Activated CD4-positive, alpha-beta T cell treated with anti-CD3 and anti-CD28 coated beads for 36 hours (primary cell): ENCODE measurements at regions of chr16 and their contacts with region 1.

Region 1: DNA sequence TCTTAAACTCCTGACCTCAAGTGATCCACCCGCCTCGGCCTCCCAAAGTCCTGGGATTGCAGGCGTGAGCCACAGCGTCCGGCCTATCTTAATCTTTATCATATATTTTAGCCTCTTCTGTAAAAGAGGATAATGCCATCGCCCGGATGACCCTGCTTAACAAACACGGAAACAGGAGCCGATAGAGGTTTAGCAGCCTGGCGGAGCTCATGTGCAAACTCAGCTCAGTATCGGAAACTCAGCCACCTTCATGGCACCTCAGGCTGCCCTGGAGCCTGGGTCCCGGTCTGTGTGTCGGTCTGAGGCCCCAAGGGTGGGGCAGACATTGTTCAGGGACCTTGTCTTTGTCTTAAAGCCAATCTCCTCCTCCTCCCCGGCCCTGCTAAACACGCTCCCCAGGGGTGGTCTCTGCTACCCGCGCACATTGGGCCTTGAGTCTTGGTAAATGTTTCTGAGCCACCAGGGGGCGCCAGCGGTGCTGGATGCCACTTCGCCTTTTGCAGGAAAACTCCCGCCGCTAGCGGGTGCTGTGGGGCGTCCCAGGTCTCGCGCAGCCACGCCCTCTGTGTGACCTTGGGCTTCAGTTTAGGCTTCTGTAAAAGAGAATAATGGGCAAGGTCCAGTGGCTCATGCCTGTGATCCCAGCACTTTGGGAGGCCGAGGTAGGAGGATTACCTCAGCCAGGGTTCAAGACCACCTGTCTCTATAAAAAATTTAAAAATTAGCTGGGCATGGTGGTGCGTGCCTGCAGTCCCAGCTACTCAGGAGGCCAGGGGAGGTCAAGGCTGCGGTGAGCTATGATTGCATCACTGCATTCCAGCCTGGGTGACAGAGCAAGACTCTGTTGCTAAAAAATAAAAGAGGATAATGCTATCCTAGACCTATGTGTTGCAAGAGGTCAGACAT is 2.7 kb downstream of the CETP start:
- DNase-seq: peak; percentile 98
- ATAC-seq: peak; percentile 93
- H3K4me3 Mint-ChIP-seq: no peak overlapping the region
- H3K27ac Mint-ChIP-seq: peak overlapping the region; percentile 52
- H3K4me1 Mint-ChIP-seq: peaks cover 17% of the 10 kb centered on the region
- H3K27me3 Mint-ChIP-seq: no peaks in the 10 kb centered on the region

Region 2: DNA sequence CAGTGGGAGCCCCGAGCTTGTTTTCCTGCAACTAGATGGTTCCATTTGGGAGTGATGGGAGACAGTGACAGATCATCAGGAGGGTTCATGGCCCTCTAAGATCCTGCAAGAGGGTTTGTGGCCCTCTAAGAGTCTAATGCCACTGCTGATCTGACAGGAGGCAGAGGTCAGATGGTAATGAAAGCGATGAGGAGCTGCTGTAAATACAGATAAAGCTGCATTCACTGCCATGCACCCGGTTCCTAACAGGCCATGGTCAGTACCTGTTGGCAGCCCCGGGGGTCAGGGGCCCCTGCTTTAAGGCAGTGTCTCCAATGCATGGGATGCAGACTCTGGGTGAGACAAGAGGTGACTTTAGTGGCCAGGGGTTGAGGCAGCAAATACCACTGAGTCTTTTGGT is 68.7 kb before region 1 on chr16:
- CTCF ChIA-PET with region 1: no interaction called
- POLR2A ChIA-PET with region 1: no interaction called
- intact Hi-C with region 1: no loop called
- DNase-seq: no peak
- ATAC-seq: no peak
- H3K4me3 Mint-ChIP-seq: no peak overlapping the region
- H3K27ac Mint-ChIP-seq: no peak overlapping the region
- H3K4me1 Mint-ChIP-seq: peaks cover 16% of the 10 kb centered on the region
- H3K27me3 Mint-ChIP-seq: peaks cover 2% of the 10 kb centered on the region

Region 3: DNA sequence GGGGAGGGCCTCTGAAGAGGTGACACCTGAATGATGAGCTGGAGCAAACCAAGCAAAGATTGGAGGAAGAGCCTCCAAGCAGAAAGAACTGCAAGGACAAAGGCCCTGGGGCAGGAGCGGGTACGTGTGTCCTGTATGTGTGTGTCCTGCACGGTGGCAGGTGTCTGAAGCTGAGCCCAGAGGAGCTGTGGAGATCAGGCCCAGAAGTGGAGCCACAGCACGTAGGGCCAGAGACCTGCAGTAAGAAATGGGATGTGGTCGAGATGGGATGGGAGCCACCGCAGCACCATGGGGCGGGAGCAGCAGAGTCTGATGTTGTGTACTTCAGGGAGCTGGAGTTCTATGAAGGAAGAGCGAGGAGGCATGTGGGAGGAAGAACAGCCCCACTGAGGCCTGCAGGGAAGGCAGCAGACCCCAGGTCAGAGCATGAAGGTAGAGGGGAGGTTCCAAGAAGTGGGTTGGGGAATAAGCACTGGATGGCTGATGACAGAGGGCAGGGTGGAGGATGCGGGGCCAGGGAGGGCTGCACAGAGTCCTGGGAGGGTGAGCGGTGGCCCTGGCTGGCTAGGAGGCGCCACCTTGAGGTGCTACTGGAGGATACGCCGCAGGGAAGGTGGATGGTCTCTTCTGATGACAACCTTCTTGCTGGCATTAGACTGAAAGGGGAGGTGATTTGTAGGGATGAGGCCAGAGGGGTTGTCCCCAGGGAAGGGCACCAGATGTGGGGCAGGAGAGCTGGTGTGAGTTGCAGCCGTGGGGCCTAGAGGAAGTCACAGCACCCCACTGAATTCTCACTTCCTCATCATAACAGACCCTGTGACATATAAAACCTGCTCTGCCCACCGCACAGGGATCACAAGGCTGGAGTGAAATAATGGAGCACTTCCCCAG is 13.4 kb before region 1 on chr16:
- CTCF ChIA-PET with region 1: interaction called, 25 read pairs
- POLR2A ChIA-PET with region 1: no interaction called
- intact Hi-C with region 1: no loop called
- DNase-seq: peak; percentile 85
- ATAC-seq: peak; percentile 94
- H3K4me3 Mint-ChIP-seq: no peak overlapping the region
- H3K27ac Mint-ChIP-seq: no peak overlapping the region
- H3K4me1 Mint-ChIP-seq: peaks cover 18% of the 10 kb centered on the region
- H3K27me3 Mint-ChIP-seq: no peaks in the 10 kb centered on the region

Region 4: DNA sequence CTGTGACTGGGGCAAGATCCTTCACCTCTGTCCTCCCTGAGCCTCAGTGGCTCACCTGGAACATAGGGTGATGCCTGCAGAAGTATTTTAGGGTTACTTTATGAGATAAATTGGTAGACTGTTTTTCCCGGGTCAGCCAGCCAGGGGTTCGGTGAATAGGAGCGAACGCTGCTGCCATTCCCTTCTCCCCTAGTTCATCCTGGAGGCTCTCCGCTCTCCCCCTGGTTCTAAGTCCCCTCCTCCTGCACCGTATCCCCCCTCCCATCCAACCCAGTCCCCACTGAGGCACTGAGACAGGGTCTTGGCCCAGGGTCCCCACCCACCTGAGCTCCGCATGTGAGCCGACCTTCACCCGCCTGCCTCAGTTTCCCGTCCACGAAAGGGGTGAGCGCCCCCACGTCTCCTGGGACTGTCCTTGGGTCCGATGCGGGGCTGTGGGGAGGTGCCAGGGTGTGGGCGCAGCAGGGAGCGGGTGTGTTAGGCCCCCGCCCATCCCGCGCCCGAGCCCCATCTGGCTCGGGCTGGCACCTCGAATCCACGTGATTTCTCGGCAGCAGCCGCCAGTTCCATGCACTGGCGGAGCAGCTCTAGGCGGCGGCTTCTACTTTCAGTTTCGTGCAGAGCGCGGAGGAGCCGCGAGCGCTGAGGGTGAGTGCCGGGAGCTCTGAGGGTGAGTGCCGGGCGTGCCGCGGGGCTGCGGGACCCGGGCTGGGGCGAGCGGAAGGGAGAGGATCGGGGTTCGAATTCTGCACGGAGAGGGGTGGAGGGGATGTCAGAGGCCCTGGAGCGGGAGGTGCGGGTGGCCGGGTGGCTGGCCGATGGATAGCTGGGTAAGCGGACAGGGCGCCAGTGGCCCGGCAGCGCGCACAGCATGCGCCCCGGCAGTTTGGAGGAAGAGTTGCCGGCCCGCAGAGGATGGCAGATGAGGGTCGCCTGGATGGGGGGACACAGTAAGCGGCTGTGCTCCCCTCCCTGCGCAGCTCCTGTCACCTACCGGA is 24.8 kb after region 1 on chr16 and contains the start of gene NLRC5:
- CTCF ChIA-PET with region 1: interaction called, 38 read pairs
- POLR2A ChIA-PET with region 1: no interaction called
- intact Hi-C with region 1: loop called in 1 of 2 experiments (anchors 1 kb)
- DNase-seq: peak; percentile 97
- ATAC-seq: peak; percentile 78
- H3K4me3 Mint-ChIP-seq: peak within 1 kb of the TSS; percentile 98
- H3K27ac Mint-ChIP-seq: peak within 1 kb of the TSS; percentile 99
- H3K4me1 Mint-ChIP-seq: peaks cover 69% of the 10 kb centered on the region
- H3K27me3 Mint-ChIP-seq: no peaks in the 10 kb centered on the region
- total RNA-seq, gene NLRC5: 143 to 175 TPM

Region 5: DNA sequence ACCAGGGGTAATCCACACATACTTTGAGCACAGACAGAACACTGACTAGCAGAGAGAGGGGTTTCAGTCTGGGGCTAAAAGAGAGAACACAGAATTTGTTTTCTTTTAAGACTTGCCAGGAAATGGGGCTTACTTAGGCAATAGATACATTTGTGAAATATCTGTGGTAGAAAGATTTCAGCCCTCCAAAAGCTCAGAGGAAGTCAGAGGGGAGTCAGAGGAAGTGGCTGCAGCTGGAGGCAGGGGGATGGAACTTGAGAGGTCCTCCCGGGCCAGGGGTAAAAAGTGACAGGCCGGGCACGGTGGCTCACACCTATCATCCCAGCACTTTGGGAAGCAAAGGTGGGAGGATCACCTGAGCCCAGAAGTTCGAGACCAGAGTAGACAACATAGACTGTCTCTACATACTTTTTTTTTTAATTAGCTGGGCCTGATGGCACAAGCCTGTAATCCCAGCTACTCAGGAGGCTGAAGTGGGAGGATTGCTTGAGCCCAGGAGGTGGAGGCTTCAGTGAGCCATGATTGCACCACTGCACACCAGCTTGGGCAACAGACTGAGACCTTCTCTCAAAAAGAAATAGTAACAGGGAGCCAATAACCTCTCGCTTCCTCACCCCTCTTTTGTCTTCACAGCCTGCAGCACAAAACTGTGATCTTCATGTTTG is 74.8 kb after region 1 on chr16:
- CTCF ChIA-PET with region 1: interaction called, 25 read pairs
- POLR2A ChIA-PET with region 1: interaction called, 5 read pairs
- intact Hi-C with region 1: loop called (anchors 1 to 2 kb)
- DNase-seq: peak; percentile 60
- ATAC-seq: peak; percentile 9
- H3K4me3 Mint-ChIP-seq: peak overlapping the region; percentile 2
- H3K27ac Mint-ChIP-seq: peak overlapping the region; percentile 97
- H3K4me1 Mint-ChIP-seq: peaks cover 89% of the 10 kb centered on the region
- H3K27me3 Mint-ChIP-seq: no peaks in the 10 kb centered on the region

Region 6: DNA sequence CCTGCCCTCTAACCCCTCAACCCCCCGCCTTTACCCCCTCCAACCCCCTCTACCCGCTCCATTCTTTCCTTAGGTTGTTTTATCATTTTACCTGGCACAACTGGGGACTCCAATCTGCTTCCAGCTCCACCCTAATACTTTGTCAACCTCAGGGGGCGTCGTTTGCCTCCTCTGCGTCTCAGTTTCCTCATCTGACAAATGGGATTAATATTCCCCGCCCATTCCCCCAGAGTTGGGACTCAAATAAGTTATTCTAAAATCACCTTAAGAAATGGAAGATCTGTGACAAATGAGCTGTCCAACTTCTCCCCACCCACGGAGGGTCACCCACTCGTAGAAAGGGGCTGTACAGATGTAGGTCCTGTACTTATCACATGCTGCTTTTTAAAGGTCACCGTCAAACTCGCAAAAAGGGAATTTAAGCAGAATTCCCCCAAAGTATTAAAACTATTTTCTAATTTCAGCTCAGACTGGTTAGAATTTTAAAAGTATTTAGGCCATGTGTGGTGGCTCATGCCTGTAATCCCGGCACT is 87.3 kb after region 1 on chr16:
- CTCF ChIA-PET with region 1: interaction called, 24 read pairs
- POLR2A ChIA-PET with region 1: interaction called, 3 read pairs
- intact Hi-C with region 1: no loop called
- DNase-seq: no peak
- ATAC-seq: no peak
- H3K4me3 Mint-ChIP-seq: no peak overlapping the region
- H3K27ac Mint-ChIP-seq: peak overlapping the region; percentile 65
- H3K4me1 Mint-ChIP-seq: peaks cover 24% of the 10 kb centered on the region
- H3K27me3 Mint-ChIP-seq: no peaks in the 10 kb centered on the region

Region 7: GRCh38 chr16:57084257-57084770 is 119.8 kb after region 1 on chr16:
- CTCF ChIA-PET with region 1: interaction called, 12 read pairs
- POLR2A ChIA-PET with region 1: no interaction called
- intact Hi-C with region 1: loop called in 1 of 2 experiments (anchors 1 kb)
- DNase-seq: peak; percentile 86
- ATAC-seq: peak; percentile 83
- H3K4me3 Mint-ChIP-seq: no peak overlapping the region
- H3K27ac Mint-ChIP-seq: peak overlapping the region; percentile 49
- H3K4me1 Mint-ChIP-seq: peaks cover 8% of the 10 kb centered on the region
- H3K27me3 Mint-ChIP-seq: no peaks in the 10 kb centered on the region

Region 8: GRCh38 chr16:57277586-57277985 is 313.1 kb after region 1 on chr16:
- CTCF ChIA-PET with region 1: no interaction called
- POLR2A ChIA-PET with region 1: no interaction called
- intact Hi-C with region 1: no loop called
- DNase-seq: peak; percentile 83
- ATAC-seq: peak; percentile 97
- H3K4me3 Mint-ChIP-seq: no peak overlapping the region
- H3K27ac Mint-ChIP-seq: no peak overlapping the region
- H3K4me1 Mint-ChIP-seq: peaks cover 39% of the 10 kb centered on the region
- H3K27me3 Mint-ChIP-seq: no peaks in the 10 kb centered on the region